GM18951 (cell line): ENCODE measurements at regions of chr7 and their contacts with region 1.

Region 1: GRCh38 chr7:98841179-98841997 is 28.4 kb downstream of the TMEM130 start:
- POLR2A ChIP-seq: no peak

Region 2: GRCh38 chr7:98434095-98434494 is 407.3 kb before region 1 on chr7:
- in situ Hi-C with region 1: loop called (anchors 5 kb)
- POLR2A ChIP-seq: no peak

Region 3: GRCh38 chr7:98745722-98746318 is 95.6 kb before region 1 on chr7:
- in situ Hi-C with region 1: loop called (anchors 10 kb)
- POLR2A ChIP-seq: no peak